ENCODE measurements at regions of chr12 and their contacts with region 1.

Region 1: GRCh38 chr12:113980537-113981337 is 14.6 kb upstream of the RBM19 start:
- DNase-seq: peak; percentile 53
- CTCF ChIP-seq: peak; percentile 82

Region 2: DNA sequence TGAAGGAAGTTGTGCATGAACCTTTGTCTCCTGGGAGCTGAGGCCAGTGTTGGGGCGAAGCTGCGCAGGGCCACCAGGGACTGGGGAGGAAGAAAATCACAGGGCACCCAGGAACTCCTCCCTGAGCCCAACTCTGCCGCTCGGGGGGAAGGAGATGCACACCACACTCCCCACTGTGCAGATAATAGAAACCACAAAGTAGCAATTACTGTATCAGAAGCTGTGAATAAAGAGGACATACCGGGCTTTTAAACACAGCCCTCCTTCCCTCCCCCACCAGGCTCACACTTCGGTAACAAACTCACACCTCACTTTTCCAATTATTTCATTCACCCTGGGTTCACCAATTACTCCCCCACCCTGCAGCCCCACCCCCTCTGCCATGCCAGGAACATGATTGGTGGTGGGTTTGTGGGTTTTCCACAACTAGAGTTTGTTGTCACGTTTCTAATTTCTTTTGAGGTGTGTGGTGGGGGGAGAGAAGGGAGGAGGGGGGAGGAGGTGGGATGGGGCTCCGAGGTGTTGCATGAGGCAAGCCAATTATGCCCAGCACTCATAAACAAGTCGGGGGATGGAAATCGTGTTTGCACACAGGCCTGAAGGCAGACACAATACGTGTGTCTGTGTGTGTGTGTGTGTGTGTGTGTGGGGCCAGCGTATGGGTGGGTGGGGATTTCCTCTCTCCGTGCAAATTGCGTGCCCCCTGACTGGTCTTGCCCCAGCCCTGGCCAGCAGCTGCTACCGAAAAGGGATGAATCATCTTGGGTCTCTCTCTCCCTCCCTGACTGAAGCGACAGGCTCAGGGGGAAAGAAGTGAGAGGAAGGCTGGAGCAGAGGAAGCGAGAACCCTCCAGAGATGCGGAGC is 117.9 kb before region 1 on chr12:
- CTCF ChIA-PET with region 1: no interaction called
- POLR2A ChIA-PET with region 1: no interaction called
- DNase-seq: peak; percentile 59
- CTCF ChIP-seq: no peak

Region 3: DNA sequence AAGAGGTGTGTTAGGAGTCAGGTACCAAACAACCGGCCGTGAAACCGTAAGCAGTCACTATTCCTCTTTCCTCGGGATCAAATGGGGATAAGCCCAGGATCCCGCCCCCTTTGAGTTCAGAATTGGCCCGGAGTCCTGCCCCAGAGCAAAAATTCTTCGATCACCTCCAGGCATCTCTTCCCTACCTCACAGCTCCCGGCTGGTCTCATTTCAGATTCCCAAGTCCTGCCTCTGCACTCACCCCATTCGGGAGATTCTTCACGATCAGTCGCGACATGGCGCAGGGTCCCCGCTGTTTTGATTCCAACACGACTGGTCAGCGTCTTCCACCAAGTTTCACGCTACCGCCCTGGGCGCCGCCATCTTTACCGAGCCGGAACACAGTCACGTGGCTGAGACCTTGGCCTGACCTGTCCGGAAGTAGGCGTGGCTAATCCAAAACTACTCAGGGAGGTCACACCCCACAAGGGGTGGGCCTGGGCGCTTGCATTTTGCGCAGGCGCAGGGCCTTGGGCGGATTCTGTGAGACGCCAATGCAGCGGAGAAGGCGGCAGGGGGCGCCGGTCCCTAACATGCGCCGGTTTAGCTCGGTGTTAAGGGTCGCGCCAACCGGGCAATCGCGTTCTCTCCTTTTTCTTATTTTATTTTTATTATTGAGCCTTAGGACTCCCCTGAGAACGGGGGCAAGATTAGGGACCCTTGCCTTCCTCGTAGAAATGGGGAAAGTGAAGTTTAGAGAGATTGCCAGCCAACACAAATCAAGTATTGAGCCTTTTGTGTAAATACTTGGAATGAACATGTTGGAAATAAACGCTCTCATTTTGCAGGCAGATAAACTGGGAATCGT is 14.6 kb before region 1 on chr12 and contains the start of gene RBM19:
- CTCF ChIA-PET with region 1: interaction called, 30 read pairs
- POLR2A ChIA-PET with region 1: no interaction called
- DNase-seq: peak; percentile 97
- CTCF ChIP-seq: peak; percentile 94

Region 4: DNA sequence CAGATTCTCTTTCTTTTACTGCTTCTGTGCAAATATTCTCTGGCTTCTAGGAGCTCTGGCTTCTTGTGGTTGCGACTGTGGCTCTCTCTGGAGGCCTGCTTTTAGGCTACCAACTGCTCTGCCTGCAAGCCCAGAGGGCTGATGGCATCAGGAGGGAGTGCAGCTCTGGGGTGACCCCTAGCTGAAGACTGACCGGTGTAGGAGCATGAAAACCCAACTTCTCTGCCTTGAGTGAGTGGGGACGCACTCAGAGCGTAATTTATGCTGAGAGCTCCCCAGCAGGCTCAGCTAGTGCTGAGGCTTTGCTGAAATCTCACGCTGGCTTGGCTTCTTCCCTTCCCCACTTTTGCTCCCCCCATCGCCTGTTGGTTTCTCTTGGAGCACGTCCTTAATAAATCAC is 15.3 kb after region 1 on chr12:
- CTCF ChIA-PET with region 1: interaction called, 33 read pairs
- POLR2A ChIA-PET with region 1: no interaction called
- DNase-seq: no peak
- CTCF ChIP-seq: no peak

Region 5: DNA sequence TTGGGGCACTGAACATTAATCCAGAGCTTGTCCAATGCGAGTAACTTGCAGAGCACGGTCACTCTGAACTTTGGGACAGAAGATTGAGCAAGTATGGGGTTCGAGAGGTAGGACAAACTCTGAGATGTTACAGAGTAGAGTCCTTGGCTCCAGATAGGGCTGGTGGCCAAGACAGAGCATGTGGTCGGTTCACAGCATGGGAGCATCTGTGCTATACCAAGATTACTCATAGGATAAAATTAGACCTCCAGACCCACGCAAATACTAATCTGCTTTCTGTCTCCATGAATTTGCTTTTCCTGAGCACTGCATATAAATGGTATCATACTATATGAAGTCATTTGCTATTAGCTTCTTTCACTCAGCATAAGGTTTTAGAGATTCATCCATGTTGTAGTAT is 518.6 kb after region 1 on chr12:
- CTCF ChIA-PET with region 1: interaction called, 10 read pairs
- POLR2A ChIA-PET with region 1: no interaction called
- DNase-seq: no peak
- CTCF ChIP-seq: no peak

Region 6: GRCh38 chr12:114508529-114509129 is 527.9 kb after region 1 on chr12:
- CTCF ChIA-PET with region 1: interaction called, 87 read pairs
- POLR2A ChIA-PET with region 1: no interaction called
- DNase-seq: peak; percentile 48
- CTCF ChIP-seq: peak; percentile 80

Region 7: GRCh38 chr12:115916910-115917668 is 1936.4 kb after region 1 on chr12:
- CTCF ChIA-PET with region 1: interaction called, 26 read pairs
- POLR2A ChIA-PET with region 1: no interaction called
- DNase-seq: peak; percentile 81
- CTCF ChIP-seq: peak; percentile 85

Measured in GM10248 (cell line).